ENCODE measurements at regions of chr1 and their contacts with region 1.

Region 1: GRCh38 chr1:28642847-28643635 is at the start of gene TAF12:
- DNase-seq: peak; percentile 95
- H3K4me3 ChIP-seq: peak within 1 kb of the TSS; percentile 68 to 79 (median 70)
- H3K27ac ChIP-seq: peak within 1 kb of the TSS; percentile 85 to 95 (median 92)
- H3K4me1 ChIP-seq: peaks cover 0 to 41% (median 36%) of the 10 kb centered on the region in 4 donors
- H3K27me3 ChIP-seq: no peaks in the 10 kb centered on the region
- CTCF ChIP-seq: peak in 2 of 4 experiments; percentile 23 to 45
- EP300 ChIP-seq: no peak
- POLR2A ChIP-seq: peak; percentile 94 to 95
- total RNA-seq, gene TAF12: 16.8 to 27.5 (median 20.1) TPM

Region 2: GRCh38 chr1:28581536-28582247 is 61.3 kb before region 1 on chr1:
- intact Hi-C with region 1: loop called (anchors 5 kb)
- DNase-seq: peak; percentile 99
- H3K4me3 ChIP-seq: peak overlapping the region; percentile 69 to 96 (median 86)
- H3K27ac ChIP-seq: peak overlapping the region; percentile 82 to 98 (median 94)
- H3K4me1 ChIP-seq: peaks cover 0 to 40% (median 30%) of the 10 kb centered on the region in 4 donors
- H3K27me3 ChIP-seq: no peaks in the 10 kb centered on the region
- CTCF ChIP-seq: no peak
- EP300 ChIP-seq: no peak
- POLR2A ChIP-seq: peak; percentile 93

Region 3: DNA sequence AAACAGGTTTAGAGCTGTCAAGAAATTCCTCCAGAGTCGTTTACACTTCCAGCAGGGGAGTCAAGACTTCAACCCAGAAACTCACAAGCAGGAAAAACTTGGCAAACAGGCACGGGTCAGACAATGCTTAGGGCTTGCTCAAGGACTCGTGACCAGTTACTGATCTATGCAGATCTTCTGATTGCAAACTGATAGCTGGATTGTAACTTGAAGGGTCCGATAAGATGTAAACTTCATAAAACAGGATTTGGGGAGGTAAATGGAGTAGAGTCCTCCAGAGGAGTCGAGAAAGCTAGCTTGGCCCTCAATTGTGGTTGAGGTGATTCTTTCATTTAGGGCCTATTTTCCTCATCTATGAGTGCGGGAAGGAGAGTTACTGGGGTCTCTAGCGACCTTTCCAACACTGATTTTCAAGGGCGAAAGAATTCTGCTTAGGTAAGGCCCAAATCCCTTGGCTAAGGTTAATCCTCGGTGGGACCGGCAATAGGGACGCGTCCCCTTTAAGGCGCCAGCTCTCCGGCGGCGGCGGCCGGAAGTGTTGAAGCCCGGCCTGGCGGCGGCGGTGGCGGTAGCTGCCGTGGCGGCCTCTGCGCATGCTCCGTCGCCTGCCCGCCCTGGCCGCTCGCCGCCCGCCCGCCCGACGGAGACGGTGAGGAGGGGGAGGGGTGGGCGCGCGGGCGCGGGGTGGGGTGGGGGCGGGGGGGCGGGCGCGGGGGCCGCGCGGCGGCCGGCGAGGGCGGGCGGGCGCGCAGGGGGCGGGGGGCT is 25.3 kb after region 1 on chr1 and contains the start of gene GMEB1:
- intact Hi-C with region 1: loop called (anchors 1 kb)
- DNase-seq: peak; percentile 94
- H3K4me3 ChIP-seq: peak within 1 kb of the TSS; percentile 95 to 100 (median 98)
- H3K27ac ChIP-seq: peak within 1 kb of the TSS; percentile 99 to 100 (median 100)
- H3K4me1 ChIP-seq: peaks cover 0 to 20% (median 19%) of the 10 kb centered on the region in 4 donors
- H3K27me3 ChIP-seq: no peaks in the 10 kb centered on the region
- CTCF ChIP-seq: no peak
- EP300 ChIP-seq: no peak
- POLR2A ChIP-seq: no peak
- total RNA-seq, gene GMEB1: 6.1 to 7.3 (median 6.8) TPM

Region 4: GRCh38 chr1:28736450-28737306 is 93.6 kb after region 1 on chr1 and contains the start of gene YTHDF2:
- intact Hi-C with region 1: loop called (anchors 2 kb)
- DNase-seq: peak; percentile 98
- H3K4me3 ChIP-seq: peak within 1 kb of the TSS; percentile 85 to 97 (median 92)
- H3K27ac ChIP-seq: peak within 1 kb of the TSS; percentile 96 to 97 (median 96)
- H3K4me1 ChIP-seq: peaks cover 0 to 50% (median 43%) of the 10 kb centered on the region in 4 donors
- H3K27me3 ChIP-seq: no peaks in the 10 kb centered on the region
- CTCF ChIP-seq: peak; percentile 85 to 96 (median 90)
- EP300 ChIP-seq: no peak
- POLR2A ChIP-seq: peak; percentile 86 to 87
- total RNA-seq, gene YTHDF2: 37.9 to 47.0 (median 42.7) TPM

Region 5: DNA sequence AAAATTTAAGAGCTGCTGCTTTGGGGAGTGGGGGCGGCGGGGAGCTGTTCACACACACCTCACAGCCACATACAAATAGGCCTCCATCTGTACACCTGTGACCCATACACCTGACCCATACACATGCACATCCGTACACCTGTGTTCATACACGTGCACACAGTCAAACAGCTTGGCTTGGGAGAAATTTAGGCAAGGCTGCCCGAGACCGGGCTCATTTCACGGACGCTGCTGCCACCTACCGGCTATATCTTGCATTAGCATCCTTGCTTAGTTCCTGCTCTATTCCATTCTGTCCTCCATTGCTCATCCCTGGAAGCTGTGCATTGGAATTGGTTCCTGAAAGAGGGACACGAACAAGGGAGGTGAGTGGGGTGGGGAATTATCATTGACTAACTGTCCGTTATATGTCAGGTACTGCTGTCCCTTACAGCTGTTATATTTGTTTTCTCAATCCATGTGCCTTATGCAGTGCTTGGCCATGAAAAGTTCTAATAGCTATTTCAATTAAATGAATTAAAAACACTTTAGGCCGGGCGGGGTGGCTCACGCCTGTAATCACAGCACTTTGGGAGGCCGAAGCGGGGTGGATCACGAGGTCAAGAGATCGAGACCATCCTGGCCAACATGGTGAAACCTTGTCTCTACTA is 234.2 kb after region 1 on chr1:
- intact Hi-C with region 1: loop called (anchors 5 kb)
- DNase-seq: peak; percentile 84
- H3K4me3 ChIP-seq: no peak overlapping the region
- H3K27ac ChIP-seq: no peak overlapping the region
- H3K4me1 ChIP-seq: peaks cover 0 to 5% (median 2%) of the 10 kb centered on the region in 4 donors
- H3K27me3 ChIP-seq: no peaks in the 10 kb centered on the region
- CTCF ChIP-seq: peak; percentile 80 to 91 (median 86)
- EP300 ChIP-seq: no peak
- POLR2A ChIP-seq: no peak

Region 6: GRCh38 chr1:29181413-29182225 is 538.6 kb after region 1 on chr1 and contains the start of gene SRSF4:
- intact Hi-C with region 1: loop called (anchors 10 kb)
- DNase-seq: peak; percentile 100
- H3K4me3 ChIP-seq: peak within 1 kb of the TSS; percentile 80 to 97 (median 92)
- H3K27ac ChIP-seq: peak within 1 kb of the TSS; percentile 98 to 100 (median 99)
- H3K4me1 ChIP-seq: peaks cover 0 to 49% (median 46%) of the 10 kb centered on the region in 4 donors
- H3K27me3 ChIP-seq: no peaks in the 10 kb centered on the region
- CTCF ChIP-seq: peak in 3 of 4 experiments; percentile 50 to 66 (median 64)
- EP300 ChIP-seq: no peak
- POLR2A ChIP-seq: peak; percentile 18 to 35
- total RNA-seq, gene SRSF4: 80.3 to 110 (median 96.6) TPM

Measured in sigmoid colon (tissue), 7 donors.